ENCODE measurements at regions of chr3 and their contacts with region 1.

Region 1: DNA sequence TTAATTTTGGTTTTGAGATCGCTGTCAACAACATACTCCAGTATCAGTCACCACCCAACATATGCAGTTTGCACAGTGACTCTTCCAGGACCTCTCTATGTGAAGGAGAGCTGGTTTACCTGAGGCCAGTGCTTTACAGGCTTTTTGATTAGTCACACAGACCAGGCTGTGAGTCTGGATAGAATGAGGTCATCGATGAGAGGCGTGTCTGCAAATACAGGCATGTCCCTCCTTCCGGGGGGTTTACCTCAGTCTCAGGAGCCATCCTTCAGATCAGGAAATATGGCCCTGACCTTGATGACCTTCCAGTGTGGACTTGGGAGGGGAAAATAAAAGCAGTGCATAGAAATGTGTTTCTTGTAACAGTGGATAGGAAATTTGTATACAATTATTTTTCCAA is 46.9 kb downstream of the KBTBD12 start:
- DNase-seq: no peak
- ATAC-seq: no peak
- H3K4me3 ChIP-seq: no peak overlapping the region
- H3K4me3 Mint-ChIP-seq: no peak overlapping the region
- H3K27ac ChIP-seq: no peak overlapping the region
- H3K27ac Mint-ChIP-seq: no peak overlapping the region
- H3K4me1 ChIP-seq: no peaks in the 10 kb centered on the region
- H3K4me1 Mint-ChIP-seq: no peaks in the 10 kb centered on the region
- H3K27me3 ChIP-seq: no peaks in the 10 kb centered on the region
- H3K27me3 Mint-ChIP-seq: peaks cover 9% of the 10 kb centered on the region
- CTCF ChIP-seq: no peak

Region 2: GRCh38 chr3:127951276-127951675 is 10.7 kb before region 1 on chr3:
- CTCF ChIA-PET with region 1: interaction called, 3 read pairs
- POLR2A ChIA-PET with region 1: no interaction called
- intact Hi-C with region 1: loop called in 1 of 2 experiments (anchors 2 kb)
- DNase-seq: no peak
- ATAC-seq: no peak
- H3K4me3 ChIP-seq: no peak overlapping the region
- H3K4me3 Mint-ChIP-seq: no peak overlapping the region
- H3K27ac ChIP-seq: no peak overlapping the region
- H3K27ac Mint-ChIP-seq: no peak overlapping the region
- H3K4me1 ChIP-seq: no peaks in the 10 kb centered on the region
- H3K4me1 Mint-ChIP-seq: no peaks in the 10 kb centered on the region
- H3K27me3 ChIP-seq: no peaks in the 10 kb centered on the region
- H3K27me3 Mint-ChIP-seq: peaks cover 27% of the 10 kb centered on the region
- CTCF ChIP-seq: no peak

Region 3: DNA sequence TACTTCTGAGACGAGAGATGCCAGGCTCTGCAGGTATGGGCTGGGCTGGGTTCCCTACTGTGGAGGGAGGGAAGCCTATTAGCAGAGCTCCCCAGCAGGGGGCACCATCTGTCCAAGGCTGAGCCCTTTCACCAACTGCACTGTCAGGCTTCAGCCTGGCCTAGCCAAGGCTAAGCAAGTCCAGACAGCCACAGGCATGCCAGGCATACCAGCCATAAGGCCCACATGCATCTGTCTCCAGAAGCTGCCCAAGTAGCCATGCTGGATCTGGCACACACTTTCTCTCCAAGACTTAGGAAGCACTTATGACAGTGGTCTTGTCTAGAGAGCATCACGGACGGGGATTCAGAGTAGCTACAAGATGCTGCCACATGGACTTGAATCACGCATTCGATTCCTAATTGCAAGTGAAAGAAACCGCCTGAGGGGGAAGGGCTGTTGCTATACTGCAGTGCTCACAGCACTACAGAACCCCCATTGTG is 133.3 kb after region 1 on chr3:
- CTCF ChIA-PET with region 1: no interaction called
- POLR2A ChIA-PET with region 1: no interaction called
- intact Hi-C with region 1: no loop called
- DNase-seq: peak; percentile 65 to 87 (median 80)
- ATAC-seq: peak; percentile 99
- H3K4me3 ChIP-seq: no peak overlapping the region
- H3K4me3 Mint-ChIP-seq: no peak overlapping the region
- H3K27ac ChIP-seq: no peak overlapping the region
- H3K27ac Mint-ChIP-seq: peak overlapping the region; percentile 42
- H3K4me1 ChIP-seq: peaks cover 6% of the 10 kb centered on the region
- H3K4me1 Mint-ChIP-seq: peaks cover 11% of the 10 kb centered on the region
- H3K27me3 ChIP-seq: no peaks in the 10 kb centered on the region
- H3K27me3 Mint-ChIP-seq: no peaks in the 10 kb centered on the region
- CTCF ChIP-seq: peak; percentile 69

Measured in CD8-positive, alpha-beta T cell (primary cell).